CD4-positive, alpha-beta T cell (primary cell): ENCODE measurements at regions of chr6 and their contacts with region 1.

Region 1: GRCh38 chr6:30453508-30454116 is 35.7 kb upstream of the HLA-E start:
- DNase-seq: peak; percentile 77 to 95 (median 86)
- ATAC-seq: peak; percentile 76
- H3K4me3 ChIP-seq: peak overlapping the region; percentile 22
- H3K4me3 Mint-ChIP-seq: peak overlapping the region; percentile 67
- H3K27ac ChIP-seq: no peak overlapping the region
- H3K27ac Mint-ChIP-seq: no peak overlapping the region
- H3K4me1 ChIP-seq: peaks cover 44% of the 10 kb centered on the region
- H3K4me1 Mint-ChIP-seq: peaks cover 49% of the 10 kb centered on the region
- H3K27me3 ChIP-seq: peaks cover 64 to 78% of the 10 kb centered on the region in 2 experiments
- H3K27me3 Mint-ChIP-seq: peaks cover 91% of the 10 kb centered on the region
- CTCF ChIP-seq: peak; percentile 56

Region 2: DNA sequence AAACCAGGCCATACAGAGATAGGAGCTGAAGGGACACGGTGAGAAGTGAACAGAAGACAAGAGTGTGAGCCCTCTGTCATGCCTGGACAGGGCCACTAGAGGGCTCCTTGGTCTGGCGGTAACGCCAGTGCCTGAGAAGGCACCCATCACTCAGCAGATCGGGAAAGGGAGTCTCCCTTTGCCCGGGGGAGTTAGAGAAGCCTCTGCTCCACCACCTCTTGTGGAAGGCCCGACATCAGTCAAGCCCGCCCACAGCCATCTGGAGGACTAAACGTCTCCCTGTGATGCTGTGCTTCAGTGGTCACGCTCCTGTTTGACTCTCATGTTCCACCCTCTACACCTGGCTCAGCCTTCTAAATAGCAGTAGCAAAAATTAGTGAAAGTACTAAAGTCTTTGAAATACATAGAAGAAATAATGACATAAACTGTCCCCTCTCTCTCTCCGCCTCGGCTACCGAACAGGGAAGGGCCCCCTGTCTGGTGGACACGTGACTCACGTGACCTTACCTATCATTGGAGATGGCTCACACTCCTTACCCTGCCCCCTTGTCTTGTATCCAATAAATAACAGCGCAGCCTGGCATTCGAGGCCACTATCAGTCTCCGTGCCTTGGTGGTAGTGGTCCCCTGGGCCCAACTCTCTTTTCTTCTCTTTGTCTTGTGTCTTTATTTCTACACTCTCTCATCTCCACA is 42.0 kb before region 1 on chr6:
- CTCF ChIA-PET with region 1: interaction called, 4 read pairs
- POLR2A ChIA-PET with region 1: interaction called, 4 read pairs
- intact Hi-C with region 1: loop called in 1 of 2 experiments (anchors 2 kb)
- DNase-seq: peak; percentile 32 to 77 (median 52)
- ATAC-seq: peak; percentile 63
- H3K4me3 ChIP-seq: no peak overlapping the region
- H3K4me3 Mint-ChIP-seq: no peak overlapping the region
- H3K27ac ChIP-seq: no peak overlapping the region
- H3K27ac Mint-ChIP-seq: no peak overlapping the region
- H3K4me1 ChIP-seq: peaks cover 4% of the 10 kb centered on the region
- H3K4me1 Mint-ChIP-seq: peaks cover 7% of the 10 kb centered on the region
- H3K27me3 ChIP-seq: peaks cover 0 to 31% of the 10 kb centered on the region in 2 experiments
- H3K27me3 Mint-ChIP-seq: peaks cover 70% of the 10 kb centered on the region
- CTCF ChIP-seq: peak; percentile 76

Region 3: GRCh38 chr6:30463651-30464618 is 10.3 kb after region 1 on chr6:
- CTCF ChIA-PET with region 1: interaction called, 52 read pairs
- POLR2A ChIA-PET with region 1: interaction called, 32 read pairs
- intact Hi-C with region 1: loop called in 1 of 2 experiments (anchors 2 kb)
- DNase-seq: peak in 13 of 14 experiments; percentile 31 to 87 (median 59)
- ATAC-seq: peak; percentile 50
- H3K4me3 ChIP-seq: peak overlapping the region; percentile 35
- H3K4me3 Mint-ChIP-seq: peak overlapping the region; percentile 47
- H3K27ac ChIP-seq: no peak overlapping the region
- H3K27ac Mint-ChIP-seq: no peak overlapping the region
- H3K4me1 ChIP-seq: peaks cover 58% of the 10 kb centered on the region
- H3K4me1 Mint-ChIP-seq: peaks cover 54% of the 10 kb centered on the region
- H3K27me3 ChIP-seq: peaks cover 78 to 93% of the 10 kb centered on the region in 2 experiments
- H3K27me3 Mint-ChIP-seq: peaks cover 90% of the 10 kb centered on the region
- CTCF ChIP-seq: no peak

Region 4: GRCh38 chr6:30600451-30600961 is 146.9 kb after region 1 on chr6:
- CTCF ChIA-PET with region 1: interaction called, 13 read pairs
- POLR2A ChIA-PET with region 1: no interaction called
- intact Hi-C with region 1: no loop called
- DNase-seq: no peak
- ATAC-seq: no peak
- H3K4me3 ChIP-seq: no peak overlapping the region
- H3K4me3 Mint-ChIP-seq: no peak overlapping the region
- H3K27ac ChIP-seq: peak overlapping the region; percentile 29 to 37
- H3K27ac Mint-ChIP-seq: peak overlapping the region; percentile 58
- H3K4me1 ChIP-seq: peaks cover 14% of the 10 kb centered on the region
- H3K4me1 Mint-ChIP-seq: peaks cover 35% of the 10 kb centered on the region
- H3K27me3 ChIP-seq: no peaks in the 10 kb centered on the region
- H3K27me3 Mint-ChIP-seq: no peaks in the 10 kb centered on the region
- CTCF ChIP-seq: no peak

Region 5: GRCh38 chr6:30883685-30884520 is 430.3 kb after region 1 on chr6 and contains the start of gene DDR1:
- CTCF ChIA-PET with region 1: no interaction called
- POLR2A ChIA-PET with region 1: no interaction called
- intact Hi-C with region 1: loop called in 1 of 2 experiments (anchors 10 kb)
- DNase-seq: peak in 12 of 14 experiments; percentile 19 to 76 (median 46)
- ATAC-seq: peak; percentile 59
- H3K4me3 ChIP-seq: peak within 1 kb of the TSS; percentile 62
- H3K4me3 Mint-ChIP-seq: peak within 1 kb of the TSS; percentile 89
- H3K27ac ChIP-seq: peak within 1 kb of the TSS in 1 of 2 donors; percentile 29
- H3K27ac Mint-ChIP-seq: peak within 1 kb of the TSS; percentile 66
- H3K4me1 ChIP-seq: peaks cover 35% of the 10 kb centered on the region
- H3K4me1 Mint-ChIP-seq: peaks cover 33% of the 10 kb centered on the region
- H3K27me3 ChIP-seq: no peaks in the 10 kb centered on the region
- H3K27me3 Mint-ChIP-seq: no peaks in the 10 kb centered on the region
- CTCF ChIP-seq: no peak
- total RNA-seq, gene DDR1: 6.5 to 6.6 TPM